Panc1 (cell line): ENCODE measurements at regions of chr12 and their contacts with region 1.

Region 1: GRCh38 chr12:75705749-75706711 is 194.6 kb upstream of the KRR1 start:
- DNase-seq: no peak
- ATAC-seq: peak; percentile 96
- H3K4me3 ChIP-seq: no peak overlapping the region
- H3K27ac ChIP-seq: peak overlapping the region; percentile 100
- H3K4me1 ChIP-seq: peaks cover 50% of the 10 kb centered on the region
- H3K27me3 ChIP-seq: no peaks in the 10 kb centered on the region
- CTCF ChIP-seq: no peak

Region 2: GRCh38 chr12:75623631-75624118 is 82.4 kb before region 1 on chr12:
- CTCF ChIA-PET with region 1: no interaction called
- POLR2A ChIA-PET with region 1: no interaction called
- in situ Hi-C with region 1: no loop called
- intact Hi-C with region 1: loop called (anchors 10 kb)
- DNase-seq: no peak
- ATAC-seq: peak; percentile 93
- H3K4me3 ChIP-seq: no peak overlapping the region
- H3K27ac ChIP-seq: peak overlapping the region; percentile 78
- H3K4me1 ChIP-seq: peaks cover under 1% of the 10 kb centered on the region; the same call in 1 of the 2 replicates
- H3K27me3 ChIP-seq: no peaks in the 10 kb centered on the region
- CTCF ChIP-seq: peak; percentile 51

Region 3: GRCh38 chr12:76706101-76706500 is 1000.1 kb after region 1 on chr12:
- CTCF ChIA-PET with region 1: no interaction called
- POLR2A ChIA-PET with region 1: no interaction called
- in situ Hi-C with region 1: no loop called
- intact Hi-C with region 1: no loop called
- DNase-seq: no peak
- ATAC-seq: no peak
- H3K4me3 ChIP-seq: no peak overlapping the region
- H3K27ac ChIP-seq: no peak overlapping the region
- H3K4me1 ChIP-seq: no peaks in the 10 kb centered on the region
- H3K27me3 ChIP-seq: no peaks in the 10 kb centered on the region; the same call in 1 of the 2 replicates
- CTCF ChIP-seq: no peak